ENCODE measurements at regions of chr5 and their contacts with region 1.

Region 1: DNA sequence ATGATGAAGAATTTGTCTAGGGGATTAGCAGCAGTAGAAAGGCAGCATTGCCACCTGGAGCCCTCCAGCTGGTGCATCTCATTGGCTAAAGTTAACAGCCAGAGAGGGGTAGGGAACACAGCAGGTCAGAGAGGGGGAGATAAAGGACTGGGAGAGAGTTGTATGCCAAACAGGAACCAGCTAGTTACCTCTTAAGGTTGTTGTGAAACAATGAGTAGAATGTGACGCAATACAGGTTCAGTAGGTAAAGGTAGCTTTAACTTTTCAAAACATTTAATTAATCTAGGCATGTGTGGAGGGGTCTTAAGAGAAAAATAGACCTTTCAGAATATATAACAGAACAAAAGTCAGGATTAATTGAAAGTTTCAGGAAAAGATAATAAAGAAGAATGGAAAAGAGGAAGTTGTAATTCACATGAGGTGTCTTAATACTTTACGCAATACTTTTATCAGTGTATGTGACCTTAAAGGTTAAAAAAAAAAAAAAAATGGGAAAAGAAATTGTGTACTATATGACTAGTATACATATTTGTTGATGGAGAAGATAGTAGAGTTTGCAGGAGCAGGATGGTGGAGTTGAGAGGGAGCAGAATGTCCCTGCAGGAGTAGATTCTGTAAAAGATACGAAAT is 14.3 kb downstream of the FBXO38 start:
- DNase-seq: no peak
- ATAC-seq: no peak
- H3K4me3 ChIP-seq: no peak overlapping the region
- H3K27ac ChIP-seq: no peak overlapping the region
- H3K4me1 ChIP-seq: peaks cover 9% of the 10 kb centered on the region
- H3K27me3 ChIP-seq: no peaks in the 10 kb centered on the region
- CTCF ChIP-seq: no peak
- POLR2A ChIP-seq: no peak
- RAD21 ChIP-seq: no peak

Region 2: GRCh38 chr5:148433826-148434225 is 35.7 kb after region 1 on chr5:
- CTCF ChIA-PET with region 1: no interaction called
- POLR2A ChIA-PET with region 1: no interaction called
- dilution Hi-C with region 1: no loop called
- in situ Hi-C with region 1: no loop called
- intact Hi-C with region 1: loop called (anchors 5 kb)
- DNase-seq: no peak
- ATAC-seq: no peak
- H3K4me3 ChIP-seq: no peak overlapping the region
- H3K27ac ChIP-seq: no peak overlapping the region
- H3K4me1 ChIP-seq: no peaks in the 10 kb centered on the region
- H3K27me3 ChIP-seq: no peaks in the 10 kb centered on the region
- CTCF ChIP-seq: no peak
- POLR2A ChIP-seq: no peak
- RAD21 ChIP-seq: no peak

Region 3: DNA sequence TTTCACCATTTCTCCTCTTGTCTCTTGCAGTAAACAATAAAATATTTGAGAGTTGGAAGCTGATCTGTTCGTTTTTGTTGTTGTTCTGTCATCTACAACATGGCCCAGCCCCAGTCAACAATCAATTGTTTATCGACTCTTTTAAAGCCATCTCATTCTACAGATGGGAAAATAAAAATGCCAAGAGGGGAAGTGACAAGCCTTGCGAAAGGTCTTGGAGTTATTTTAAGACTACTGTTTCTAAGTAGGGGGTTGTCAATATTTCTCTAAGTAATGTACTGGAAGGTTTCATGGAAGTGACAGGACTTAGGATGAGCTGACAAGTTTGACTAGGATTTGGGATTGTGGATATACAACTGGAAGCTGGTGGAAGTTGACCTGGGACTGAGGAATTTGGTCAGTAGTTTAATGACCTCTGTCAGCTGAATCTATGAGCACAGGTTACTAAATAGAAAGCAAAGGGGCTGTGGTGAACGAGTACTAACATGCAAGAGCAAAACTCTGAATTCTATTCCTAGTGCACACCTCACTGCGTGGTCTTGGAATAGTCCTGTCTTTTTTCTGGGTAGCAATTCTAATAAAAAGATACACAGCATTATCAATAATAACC is 370.8 kb after region 1 on chr5:
- CTCF ChIA-PET with region 1: no interaction called
- POLR2A ChIA-PET with region 1: no interaction called
- dilution Hi-C with region 1: no loop called
- in situ Hi-C with region 1: no loop called
- intact Hi-C with region 1: no loop called
- DNase-seq: no peak
- ATAC-seq: no peak
- H3K4me3 ChIP-seq: no peak overlapping the region
- H3K27ac ChIP-seq: no peak overlapping the region
- H3K4me1 ChIP-seq: no peaks in the 10 kb centered on the region
- H3K27me3 ChIP-seq: peaks cover 10% of the 10 kb centered on the region
- CTCF ChIP-seq: no peak
- POLR2A ChIP-seq: no peak
- RAD21 ChIP-seq: no peak

Measured in IMR-90 (cell line).